K562 (cell line): ENCODE measurements at regions of chr11 and their contacts with region 1.

Region 1: GRCh38 chr11:30825723-30826122 is 239.6 kb upstream of the MPPED2 start:
- DNase-seq: no peak
- ATAC-seq: no peak
- H3K4me3 ChIP-seq: no peak overlapping the region
- H3K27ac ChIP-seq: no peak overlapping the region
- H3K4me1 ChIP-seq: no peaks in the 10 kb centered on the region
- H3K27me3 ChIP-seq: no peaks in the 10 kb centered on the region
- CTCF ChIP-seq: no peak
- EP300 ChIP-seq: no peak
- POLR2A ChIP-seq: no peak
- RAD21 ChIP-seq: no peak

Region 2: GRCh38 chr11:30786256-30787110 is 39.2 kb before region 1 on chr11:
- CTCF ChIA-PET with region 1: no interaction called
- POLR2A ChIA-PET with region 1: no interaction called
- in situ Hi-C with region 1: no loop called
- intact Hi-C with region 1: no loop called
- DNase-seq: no peak
- ATAC-seq: no peak
- H3K4me3 ChIP-seq: no peak overlapping the region
- H3K27ac ChIP-seq: no peak overlapping the region
- H3K4me1 ChIP-seq: no peaks in the 10 kb centered on the region
- H3K27me3 ChIP-seq: no peaks in the 10 kb centered on the region
- CTCF ChIP-seq: no peak
- EP300 ChIP-seq: no peak
- POLR2A ChIP-seq: no peak
- RAD21 ChIP-seq: no peak

Region 3: GRCh38 chr11:30879322-30880005 is 53.7 kb after region 1 on chr11:
- CTCF ChIA-PET with region 1: no interaction called
- POLR2A ChIA-PET with region 1: no interaction called
- in situ Hi-C with region 1: no loop called
- intact Hi-C with region 1: loop called (anchors 10 kb)
- DNase-seq: no peak
- ATAC-seq: no peak
- H3K4me3 ChIP-seq: no peak overlapping the region
- H3K27ac ChIP-seq: no peak overlapping the region
- H3K4me1 ChIP-seq: no peaks in the 10 kb centered on the region
- H3K27me3 ChIP-seq: no peaks in the 10 kb centered on the region
- CTCF ChIP-seq: no peak
- EP300 ChIP-seq: no peak
- POLR2A ChIP-seq: no peak
- RAD21 ChIP-seq: no peak